Spleen (tissue), 13 donors: ENCODE measurements at regions of chr13 and their contacts with region 1.

Region 1: DNA sequence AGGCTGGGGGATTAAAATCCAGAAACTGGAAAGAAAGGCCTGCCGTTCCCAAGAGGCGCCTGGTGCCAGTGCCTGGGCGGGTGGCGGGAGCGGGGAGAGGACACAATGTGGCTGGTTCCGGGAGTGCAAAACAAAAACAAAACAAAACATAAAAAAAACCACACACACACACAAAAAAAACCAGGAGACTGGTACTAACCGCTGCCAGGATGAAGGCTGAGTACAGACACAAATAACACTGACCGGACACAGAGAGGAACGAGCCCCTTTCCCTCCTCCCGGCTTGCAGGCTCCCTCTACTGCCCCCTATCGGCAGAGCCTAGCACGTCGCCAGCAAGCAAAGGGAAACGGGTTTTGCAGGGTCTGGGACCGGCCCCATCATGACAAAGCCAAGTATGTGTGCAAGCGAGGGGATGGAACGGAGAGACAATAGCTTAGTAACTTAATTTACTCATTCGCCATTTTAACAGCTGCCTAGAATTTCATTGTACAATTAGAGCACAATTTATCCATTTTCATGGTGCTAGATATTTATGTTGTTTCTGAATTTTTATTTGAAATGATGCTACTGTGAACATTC is 17.9 kb upstream of the ZDHHC20 start:
- DNase-seq: peak; percentile 93
- H3K4me3 ChIP-seq: peak overlapping the region in 6 of 8 donors; percentile 26 to 61 (median 36)
- H3K27ac ChIP-seq: peak overlapping the region in 4 of 8 donors; percentile 23 to 74 (median 43)
- H3K4me1 ChIP-seq: peaks cover 3 to 23% (median 14%) of the 10 kb centered on the region in 6 donors
- H3K27me3 ChIP-seq: peaks cover 0 to 5% (median 0%) of the 10 kb centered on the region in 7 donors
- CTCF ChIP-seq: peak; percentile 85 to 97 (median 94)
- POLR2A ChIP-seq: no peak

Region 2: GRCh38 chr13:20942938-20943559 is 533.9 kb before region 1 on chr13:
- intact Hi-C with region 1: loop called (anchors 2 kb)
- DNase-seq: no peak
- H3K4me3 ChIP-seq: no peak overlapping the region
- H3K27ac ChIP-seq: peak overlapping the region in 2 of 8 donors; percentile 9 to 20
- H3K4me1 ChIP-seq: peaks cover 0 to 18% (median 8%) of the 10 kb centered on the region in 6 donors
- H3K27me3 ChIP-seq: peaks cover 0 to 31% (median 6%) of the 10 kb centered on the region in 7 donors
- CTCF ChIP-seq: no peak
- POLR2A ChIP-seq: no peak

Region 3: DNA sequence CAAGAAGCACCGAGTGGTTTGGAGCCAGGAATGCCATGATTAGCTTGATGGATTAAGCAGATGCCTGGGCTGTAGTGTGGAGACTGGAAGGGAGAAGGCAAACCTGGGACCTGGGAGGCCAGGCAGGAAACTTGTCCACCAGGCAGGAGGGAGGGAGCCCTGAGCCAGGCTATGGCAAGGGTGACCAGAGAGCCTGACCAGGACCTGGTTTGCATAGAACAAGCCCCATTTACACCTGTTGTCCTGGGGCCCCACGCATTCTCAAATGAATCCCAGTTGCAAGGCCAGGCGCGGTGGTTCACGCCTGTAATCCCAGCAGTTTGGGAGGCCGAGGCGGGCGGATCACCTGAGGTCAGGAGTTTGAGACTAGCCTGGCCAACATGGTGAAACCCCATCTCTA is 365.4 kb before region 1 on chr13:
- intact Hi-C with region 1: loop called (anchors 5 kb)
- DNase-seq: no peak
- H3K4me3 ChIP-seq: no peak overlapping the region
- H3K27ac ChIP-seq: no peak overlapping the region
- H3K4me1 ChIP-seq: peaks cover 0 to 4% (median 0%) of the 10 kb centered on the region in 6 donors
- H3K27me3 ChIP-seq: no peaks in the 10 kb centered on the region
- CTCF ChIP-seq: no peak
- POLR2A ChIP-seq: no peak

Region 4: GRCh38 chr13:21297914-21298831 is 178.8 kb before region 1 on chr13:
- intact Hi-C with region 1: loop called (anchors 5 kb)
- DNase-seq: peak; percentile 96
- H3K4me3 ChIP-seq: peak overlapping the region; percentile 87 to 100 (median 99)
- H3K27ac ChIP-seq: peak overlapping the region; percentile 58 to 78 (median 70)
- H3K4me1 ChIP-seq: peaks cover 4 to 31% (median 25%) of the 10 kb centered on the region in 6 donors
- H3K27me3 ChIP-seq: no peaks in the 10 kb centered on the region
- CTCF ChIP-seq: peak; percentile 80 to 95 (median 93)
- POLR2A ChIP-seq: no peak

Region 5: GRCh38 chr13:21625366-21625765 is 148.4 kb after region 1 on chr13:
- intact Hi-C with region 1: no loop called
- DNase-seq: no peak
- H3K4me3 ChIP-seq: no peak overlapping the region
- H3K27ac ChIP-seq: no peak overlapping the region
- H3K4me1 ChIP-seq: no peaks in the 10 kb centered on the region
- H3K27me3 ChIP-seq: peaks cover 0 to 7% (median 0%) of the 10 kb centered on the region in 7 donors
- CTCF ChIP-seq: peak in 1 of 11 experiments; percentile 35
- POLR2A ChIP-seq: no peak

Region 6: DNA sequence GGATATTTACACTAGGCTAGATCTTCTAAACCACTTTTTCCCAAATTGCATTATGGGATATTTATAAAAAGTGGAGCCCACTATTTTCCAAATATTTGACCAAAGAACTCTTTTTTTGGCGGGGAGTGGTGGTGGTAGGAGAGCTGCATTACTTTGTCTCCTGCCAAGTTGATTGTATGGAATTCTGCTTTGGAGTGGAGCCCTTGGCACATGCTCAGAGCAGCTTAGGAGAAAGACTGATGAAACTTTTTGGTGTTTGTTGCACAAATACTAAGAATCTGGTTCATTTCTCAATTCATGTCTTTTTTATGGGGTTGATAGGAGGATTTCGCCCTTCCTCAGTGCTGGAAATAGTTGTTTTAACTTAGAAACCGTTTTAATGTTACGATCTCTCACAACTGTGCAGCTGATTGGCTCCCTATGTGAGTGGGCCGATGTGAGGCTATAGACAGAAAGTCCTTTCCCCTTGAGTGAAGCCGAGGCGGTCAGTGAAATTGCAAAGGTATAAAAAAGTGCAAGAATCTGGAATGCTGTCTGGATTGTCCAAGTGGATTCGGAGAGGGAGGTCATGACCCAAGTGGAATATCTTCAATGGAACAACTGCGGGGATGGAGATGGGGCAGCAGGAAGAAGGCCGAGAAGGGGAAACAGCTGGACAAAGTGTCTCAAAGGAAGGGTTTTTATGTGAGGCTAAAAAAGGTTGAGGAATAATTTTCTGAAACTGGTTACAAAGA is 609.8 kb after region 1 on chr13:
- intact Hi-C with region 1: no loop called
- DNase-seq: no peak
- H3K4me3 ChIP-seq: no peak overlapping the region
- H3K27ac ChIP-seq: no peak overlapping the region
- H3K4me1 ChIP-seq: no peaks in the 10 kb centered on the region
- H3K27me3 ChIP-seq: no peaks in the 10 kb centered on the region
- CTCF ChIP-seq: no peak
- POLR2A ChIP-seq: no peak